Ascending aorta (tissue), 2 donors: ENCODE measurements at regions of chrX and their contacts with region 1.

Region 1: DNA sequence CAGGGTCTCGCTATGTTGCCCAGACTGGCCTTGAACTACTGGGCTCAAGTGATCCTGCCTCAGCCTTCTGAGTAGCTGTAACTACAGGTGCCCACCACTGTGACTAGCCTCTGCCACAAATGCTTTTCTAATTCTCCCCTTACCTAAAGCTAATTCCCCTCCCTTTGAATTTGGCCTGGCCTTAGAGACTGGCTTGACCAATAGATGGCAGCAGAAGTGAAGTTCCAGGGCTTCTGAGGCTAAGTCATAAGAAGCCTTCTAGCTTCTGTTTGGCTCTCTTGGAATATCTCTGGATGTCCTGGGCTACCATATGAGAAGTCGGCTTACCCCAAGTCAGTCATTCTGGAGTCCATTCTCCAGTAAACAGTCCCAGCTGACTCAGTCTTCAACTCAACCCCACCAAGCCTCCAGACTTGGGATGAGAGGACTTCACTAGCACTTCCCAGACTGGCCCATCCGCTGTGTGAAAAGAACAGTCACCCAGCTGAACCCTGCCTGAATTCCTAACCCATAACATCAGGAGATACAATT is 61.0 kb downstream of the HPRT1 start:
- DNase-seq: no peak
- H3K4me3 ChIP-seq: no peak overlapping the region
- H3K27ac ChIP-seq: no peak overlapping the region
- H3K4me1 ChIP-seq: no peaks in the 10 kb centered on the region
- H3K27me3 ChIP-seq: no peaks in the 10 kb centered on the region
- CTCF ChIP-seq: peak; percentile 19 to 44 (median 27)

Region 2: GRCh38 chrX:134753718-134754008 is 232.7 kb after region 1 on chrX:
- intact Hi-C with region 1: loop called (anchors 10 kb)
- DNase-seq: no peak
- H3K4me3 ChIP-seq: no peak overlapping the region
- H3K27ac ChIP-seq: no peak overlapping the region
- H3K4me1 ChIP-seq: no peaks in the 10 kb centered on the region
- H3K27me3 ChIP-seq: no peaks in the 10 kb centered on the region
- CTCF ChIP-seq: no peak